ENCODE measurements at regions of chr17 and their contacts with region 1.

Region 1: DNA sequence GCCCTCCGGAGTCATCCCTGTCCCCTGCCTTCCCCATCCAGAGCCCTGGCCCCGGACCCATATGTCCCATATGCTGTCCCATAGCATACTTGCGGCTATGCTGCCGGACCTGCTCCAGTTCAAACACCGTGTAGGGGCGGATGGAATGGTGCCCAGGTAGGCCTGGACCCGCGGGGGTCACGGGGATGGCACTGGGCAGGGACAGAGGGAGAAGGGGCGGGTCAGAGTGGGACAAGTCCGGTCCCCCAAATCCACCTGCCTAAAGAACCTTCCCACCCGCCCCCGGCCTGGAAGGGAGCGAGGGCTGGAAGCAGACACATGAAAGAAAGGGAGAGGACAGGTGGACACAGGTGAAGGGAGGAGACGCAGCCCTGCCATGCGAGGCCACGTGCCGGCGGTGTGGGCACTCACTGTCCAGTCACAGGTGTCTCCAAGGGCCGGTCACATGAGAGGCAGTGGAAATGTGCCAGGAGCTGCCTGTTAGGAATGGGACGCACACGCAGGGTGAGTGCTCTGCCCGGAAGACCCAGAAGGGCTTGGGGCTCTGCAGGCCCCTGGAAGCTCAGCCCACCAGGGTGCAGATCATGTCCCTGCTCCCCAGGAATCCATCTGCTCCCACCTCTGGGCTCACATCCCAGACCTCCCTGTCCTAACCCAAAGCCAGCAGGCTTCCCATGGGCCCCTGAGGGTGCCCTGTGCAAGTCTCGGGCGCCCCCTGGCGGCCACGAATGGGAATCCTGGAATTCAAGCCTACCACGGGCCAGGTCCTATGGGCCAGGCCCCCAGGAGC is 14.0 kb downstream of the UBALD2 start:
- DNase-seq: peak; percentile 97

Region 2: DNA sequence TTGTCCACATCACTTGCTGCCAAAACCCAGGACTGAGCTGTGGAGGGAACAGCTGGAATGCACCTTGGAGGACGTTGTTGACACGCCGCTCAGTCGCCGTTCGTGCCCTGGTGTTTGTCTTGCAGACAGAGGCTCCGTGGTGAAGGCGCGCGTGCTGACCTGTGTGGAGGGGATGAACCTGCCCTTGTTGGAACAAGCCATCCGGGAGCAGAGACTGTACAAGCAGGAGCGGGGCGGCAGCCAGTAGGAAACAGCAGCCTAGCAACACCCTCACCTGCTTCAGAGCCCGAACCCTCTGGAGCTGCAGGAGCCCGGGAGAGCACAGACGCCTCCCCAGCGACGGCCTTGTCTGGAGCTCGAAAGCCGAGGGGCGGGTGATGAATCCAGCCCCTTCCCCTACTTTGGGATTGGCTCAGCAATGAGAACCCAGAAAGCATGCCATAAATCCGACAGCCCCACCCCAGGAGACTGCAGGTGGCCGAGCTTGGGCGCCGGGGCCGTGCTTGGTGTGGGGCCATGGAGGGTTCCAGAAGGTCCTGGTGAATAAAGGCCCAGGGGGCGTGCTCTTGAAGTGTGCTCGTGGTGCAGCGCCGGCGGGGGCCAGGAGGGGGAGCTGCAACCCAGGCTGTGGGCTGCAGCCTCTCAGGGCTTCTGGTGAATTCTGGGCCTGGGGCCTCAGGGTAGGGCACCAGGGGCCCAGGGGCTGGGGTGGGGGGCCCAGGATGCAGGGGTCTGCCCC is 279.0 kb before region 1 on chr17:
- intact Hi-C with region 1: no loop called
- DNase-seq: no peak

Region 3: DNA sequence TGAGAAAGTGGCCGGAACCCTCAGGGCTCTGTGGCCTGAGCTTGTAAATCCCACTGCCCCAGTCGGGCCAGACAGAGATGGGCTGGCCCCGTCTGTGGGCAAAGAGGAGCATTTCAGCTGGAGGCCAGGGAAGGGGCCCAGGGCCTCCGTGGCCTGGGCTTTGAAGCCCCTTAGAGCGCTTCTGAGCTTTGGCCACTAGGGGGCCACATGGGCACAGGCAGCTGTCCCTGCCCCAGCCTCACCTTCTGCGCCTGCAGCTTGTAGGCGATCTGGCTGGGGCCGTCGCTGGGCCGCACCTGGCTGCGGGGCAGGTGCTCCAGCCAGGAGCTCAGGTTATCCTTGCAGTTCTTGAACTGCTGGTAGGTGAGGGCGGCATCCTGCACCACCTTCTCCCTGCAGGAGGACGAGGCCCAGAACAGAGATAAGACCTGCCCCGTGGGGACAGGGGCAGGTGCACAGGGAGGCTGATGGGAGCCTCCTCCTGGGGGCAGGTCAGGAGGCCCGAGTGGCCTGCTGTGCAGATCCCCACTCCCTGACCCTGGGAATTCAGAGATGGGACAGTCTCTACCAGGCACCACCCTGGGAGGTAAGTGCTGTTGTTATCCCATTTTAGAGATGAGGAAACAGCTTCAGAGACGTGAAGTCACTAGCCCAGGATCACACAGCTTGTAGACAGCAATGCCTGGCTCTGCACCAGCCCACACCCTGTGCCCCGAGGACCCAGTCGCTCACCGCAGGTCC is 264.8 kb before region 1 on chr17:
- intact Hi-C with region 1: loop called (anchors 5 to 10 kb)
- DNase-seq: no peak

Region 4: DNA sequence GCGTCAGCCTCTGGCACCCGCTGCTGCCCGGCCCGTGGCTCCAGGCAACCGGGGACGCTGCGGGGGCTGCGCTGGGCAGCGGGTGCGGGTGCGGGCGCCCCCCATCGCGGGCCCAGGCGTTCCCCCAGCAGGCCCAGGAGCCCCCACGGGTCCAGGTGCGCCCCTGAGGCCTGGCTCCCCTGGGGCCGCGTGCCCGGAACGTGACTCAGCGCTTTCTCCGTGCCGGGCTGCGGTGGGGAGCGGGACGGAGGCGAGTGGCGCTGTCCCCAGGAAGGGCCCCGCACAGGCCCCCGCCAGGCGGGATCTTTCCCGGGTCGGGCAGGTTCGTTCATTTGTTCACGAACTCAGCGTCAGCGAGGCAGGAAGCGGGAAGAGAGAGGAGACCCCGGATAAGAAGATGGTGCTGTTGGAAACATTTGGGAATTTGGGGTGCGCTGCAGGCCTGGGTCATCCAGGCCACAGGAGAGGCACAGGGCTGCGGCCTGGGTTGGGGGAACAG is 157.2 kb before region 1 on chr17:
- intact Hi-C with region 1: loop called (anchors 1 to 2 kb)
- DNase-seq: no peak

Region 5: GRCh38 chr17:76252040-76252954 is 26.9 kb before region 1 on chr17:
- intact Hi-C with region 1: loop called in 1 of 2 experiments (anchors 2 kb)
- DNase-seq: peak; percentile 92

Region 6: DNA sequence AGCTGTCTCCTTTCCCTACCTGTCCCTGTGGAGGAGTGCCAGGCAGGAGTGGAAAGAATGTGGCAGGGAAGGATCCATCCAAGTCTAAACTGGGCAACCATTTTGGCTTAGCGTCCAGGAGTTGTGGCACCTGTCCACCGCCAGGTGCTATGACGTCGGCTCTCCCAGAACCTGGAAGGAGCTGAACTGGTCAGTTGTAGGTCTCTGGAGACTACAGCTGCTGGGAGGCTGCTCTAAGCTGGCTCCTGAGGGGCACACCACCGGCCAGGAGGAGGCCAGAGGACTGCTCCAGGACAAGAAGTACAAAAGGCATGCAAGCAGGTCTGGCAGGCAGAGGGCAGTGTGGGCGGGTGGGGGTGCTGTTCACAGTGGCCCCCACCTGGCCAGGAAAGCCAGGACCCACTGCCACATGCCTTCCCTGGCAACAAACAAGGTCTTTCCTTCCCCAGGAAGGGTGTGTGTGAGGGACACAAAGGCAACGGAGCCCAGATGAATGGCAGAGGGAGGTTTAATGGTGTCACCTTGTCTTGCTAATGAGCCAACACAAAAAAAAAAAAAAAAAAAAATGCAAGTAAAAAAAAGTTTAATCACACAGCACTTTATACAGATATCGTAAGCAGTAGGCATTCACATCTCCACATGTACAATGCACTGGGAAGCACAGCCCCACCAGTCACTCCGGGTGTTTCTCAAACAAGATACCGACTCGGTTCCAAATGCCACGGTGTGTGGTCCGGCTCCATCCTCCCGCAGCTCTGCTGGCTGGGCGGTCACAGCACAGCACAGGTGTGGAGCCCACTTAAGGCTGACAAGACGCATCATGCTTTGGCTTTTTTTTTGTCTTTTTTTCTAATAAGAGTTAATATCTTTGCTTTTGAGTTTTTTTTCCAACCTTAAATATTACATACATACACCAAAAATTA is 110.1 kb after region 1 on chr17:
- intact Hi-C with region 1: no loop called
- DNase-seq: no peak

Measured in posterior vena cava (tissue), 2 donors.